Esophagus muscularis mucosa (tissue), 4 donors: ENCODE measurements at regions of chr19 and their contacts with region 1.

Region 1: GRCh38 chr19:18112989-18113478 is 15.5 kb downstream of the MAST3 start:
- DNase-seq: no peak
- H3K4me3 ChIP-seq: no peak overlapping the region
- H3K27ac ChIP-seq: no peak overlapping the region
- H3K4me1 ChIP-seq: peaks cover 20 to 38% (median 32%) of the 10 kb centered on the region in 4 donors
- H3K27me3 ChIP-seq: peaks cover 0 to 14% (median 2%) of the 10 kb centered on the region in 4 donors
- CTCF ChIP-seq: peak; percentile 84 to 92 (median 87)
- EP300 ChIP-seq: no peak
- POLR2A ChIP-seq: no peak

Region 2: DNA sequence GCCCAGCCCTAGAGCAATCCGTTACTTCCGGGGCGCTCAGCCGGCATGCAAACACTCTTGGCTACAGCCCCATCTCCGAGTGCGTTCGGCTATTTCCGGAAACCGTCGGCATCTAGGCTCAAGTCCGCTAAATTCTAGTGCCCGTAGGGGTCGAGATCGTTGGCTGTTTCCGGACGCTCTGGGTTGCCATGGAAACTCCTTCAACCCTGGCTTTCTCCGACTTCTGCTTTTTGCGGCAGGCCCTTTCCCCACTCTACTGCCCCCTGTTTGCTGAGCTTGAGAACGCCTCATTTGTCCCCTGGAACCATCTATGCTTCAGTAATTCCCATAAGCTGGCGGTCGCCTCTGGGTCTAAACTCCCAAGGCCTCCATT is 39.4 kb after region 1 on chr19:
- intact Hi-C with region 1: loop called (anchors 5 kb)
- DNase-seq: peak; percentile 99
- H3K4me3 ChIP-seq: peak overlapping the region; percentile 79 to 97 (median 86)
- H3K27ac ChIP-seq: peak overlapping the region; percentile 89 to 97 (median 94)
- H3K4me1 ChIP-seq: peaks cover 35 to 53% (median 50%) of the 10 kb centered on the region in 4 donors
- H3K27me3 ChIP-seq: no peaks in the 10 kb centered on the region
- CTCF ChIP-seq: peak; percentile 43 to 66 (median 59)
- EP300 ChIP-seq: no peak
- POLR2A ChIP-seq: no peak

Region 3: GRCh38 chr19:18167975-18168645 is 55.1 kb after region 1 on chr19:
- intact Hi-C with region 1: loop called (anchors 2 kb)
- DNase-seq: no peak
- H3K4me3 ChIP-seq: no peak overlapping the region
- H3K27ac ChIP-seq: no peak overlapping the region
- H3K4me1 ChIP-seq: peaks cover 2 to 10% (median 9%) of the 10 kb centered on the region in 4 donors
- H3K27me3 ChIP-seq: no peaks in the 10 kb centered on the region
- CTCF ChIP-seq: peak; percentile 64 to 82 (median 77)
- EP300 ChIP-seq: no peak
- POLR2A ChIP-seq: no peak

Region 4: GRCh38 chr19:18251587-18252369 is 138.7 kb after region 1 on chr19:
- intact Hi-C with region 1: loop called (anchors 2 kb)
- DNase-seq: peak; percentile 96
- H3K4me3 ChIP-seq: no peak overlapping the region
- H3K27ac ChIP-seq: no peak overlapping the region
- H3K4me1 ChIP-seq: peaks cover 0 to 3% (median 0%) of the 10 kb centered on the region in 4 donors
- H3K27me3 ChIP-seq: peaks cover 0 to 32% (median 3%) of the 10 kb centered on the region in 4 donors
- CTCF ChIP-seq: peak in 2 of 3 experiments; percentile 95 to 98
- EP300 ChIP-seq: no peak
- POLR2A ChIP-seq: no peak